PC-9 (cell line): ENCODE measurements at regions of chr19 and their contacts with region 1.

Region 1: DNA sequence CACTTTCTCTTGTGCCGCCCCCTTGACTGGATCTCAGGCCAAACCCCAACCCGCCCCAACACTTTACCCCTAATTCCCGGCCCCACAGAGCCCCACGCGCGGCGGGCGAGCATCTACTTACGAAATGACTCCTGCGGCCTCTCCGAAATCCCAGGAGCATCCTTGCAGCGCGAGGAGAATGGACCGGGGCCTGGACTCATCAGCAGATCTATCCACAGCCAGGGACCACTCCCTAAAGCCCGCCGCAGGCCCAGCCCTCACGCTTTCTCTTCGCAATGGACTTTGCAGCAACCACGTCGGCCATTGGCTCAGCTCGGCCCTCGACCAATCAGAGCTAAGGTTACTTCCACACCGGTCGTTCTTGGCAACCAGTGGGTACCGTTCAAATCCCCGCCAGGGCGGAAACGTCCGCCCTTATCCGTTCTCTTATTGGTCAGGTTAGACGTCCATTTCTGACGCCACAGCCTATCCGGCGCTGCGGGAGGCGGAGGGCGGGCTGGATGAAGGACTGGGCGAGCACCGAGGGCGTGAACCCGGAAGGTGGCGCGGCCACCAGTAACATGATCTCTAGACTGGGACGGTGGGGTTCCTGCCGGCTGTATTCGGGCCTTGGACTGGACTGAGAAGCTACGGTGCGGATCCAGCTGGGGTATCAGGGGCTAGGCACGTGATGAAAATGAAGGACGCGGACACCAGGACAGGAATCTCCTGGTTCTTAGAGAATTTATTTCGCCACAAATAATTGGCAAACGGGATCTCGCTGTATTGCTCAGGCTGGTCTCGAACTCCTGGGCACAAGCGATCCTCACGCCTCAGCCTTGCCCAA is at the starts of genes CEP89 and FAAP24:
- DNase-seq: peak; percentile 99
- H3K4me3 ChIP-seq: peak within 1 kb of the TSS; percentile 86
- H3K27ac ChIP-seq: peak within 1 kb of the TSS; percentile 46
- H3K4me1 ChIP-seq: no peaks in the 10 kb centered on the region; the same call in 1 of the 2 replicates
- H3K27me3 ChIP-seq: no peaks in the 10 kb centered on the region
- CTCF ChIP-seq: no peak
- total RNA-seq, gene CEP89: 29.3 and 33.6 TPM in 2 replicates
- total RNA-seq, gene FAAP24: 6.9 and 10.1 TPM in 2 replicates

Region 2: GRCh38 chr19:32691291-32691951 is 280.5 kb before region 1 on chr19 and contains the start of gene NUDT19:
- CTCF ChIA-PET with region 1: no interaction called
- POLR2A ChIA-PET with region 1: no interaction called
- intact Hi-C with region 1: loop called (anchors 5 kb)
- DNase-seq: peak; percentile 75 to 90
- H3K4me3 ChIP-seq: peak within 1 kb of the TSS; percentile 85
- H3K27ac ChIP-seq: peak within 1 kb of the TSS; percentile 68; the same call in 1 of the 2 replicates
- H3K4me1 ChIP-seq: peaks cover 35% of the 10 kb centered on the region
- H3K27me3 ChIP-seq: no peaks in the 10 kb centered on the region
- CTCF ChIP-seq: no peak
- total RNA-seq, gene NUDT19: 21.3 and 26.7 TPM in 2 replicates

Region 3: DNA sequence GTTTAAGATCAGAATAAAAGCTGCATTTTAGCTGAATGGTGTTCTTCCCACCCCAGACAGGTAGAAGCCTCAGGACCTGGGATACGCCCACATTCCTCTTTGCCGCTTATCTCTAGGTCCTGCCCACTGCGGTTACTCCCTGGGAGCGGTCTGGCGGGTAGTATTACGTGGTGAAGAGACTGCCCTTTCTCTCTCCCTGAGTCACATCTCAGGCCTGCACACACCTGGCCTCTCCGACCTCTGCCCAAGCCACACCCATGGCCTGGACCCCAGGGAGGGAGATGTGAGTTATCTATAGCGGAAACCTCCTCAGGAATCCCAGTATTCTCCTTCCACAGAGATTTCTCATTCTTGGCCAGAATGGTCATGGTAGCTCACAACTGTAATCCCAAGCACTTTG is 75.5 kb after region 1 on chr19:
- CTCF ChIA-PET with region 1: interaction called, 3 read pairs
- POLR2A ChIA-PET with region 1: interaction called, 16 read pairs
- intact Hi-C with region 1: no loop called
- DNase-seq: peak; percentile 96 to 99
- H3K4me3 ChIP-seq: peak overlapping the region; percentile 17; the same call in 1 of the 2 replicates
- H3K27ac ChIP-seq: peak overlapping the region; percentile 98
- H3K4me1 ChIP-seq: peaks cover 85% of the 10 kb centered on the region
- H3K27me3 ChIP-seq: no peaks in the 10 kb centered on the region
- CTCF ChIP-seq: no peak

Region 4: GRCh38 chr19:33071887-33072286 is 100.0 kb after region 1 on chr19:
- CTCF ChIA-PET with region 1: no interaction called
- POLR2A ChIA-PET with region 1: interaction called, 22 read pairs
- intact Hi-C with region 1: no loop called
- DNase-seq: peak in 1 of 2 experiments; percentile 52
- H3K4me3 ChIP-seq: no peak overlapping the region
- H3K27ac ChIP-seq: no peak overlapping the region
- H3K4me1 ChIP-seq: peaks cover 9% of the 10 kb centered on the region
- H3K27me3 ChIP-seq: no peaks in the 10 kb centered on the region
- CTCF ChIP-seq: no peak

Region 5: DNA sequence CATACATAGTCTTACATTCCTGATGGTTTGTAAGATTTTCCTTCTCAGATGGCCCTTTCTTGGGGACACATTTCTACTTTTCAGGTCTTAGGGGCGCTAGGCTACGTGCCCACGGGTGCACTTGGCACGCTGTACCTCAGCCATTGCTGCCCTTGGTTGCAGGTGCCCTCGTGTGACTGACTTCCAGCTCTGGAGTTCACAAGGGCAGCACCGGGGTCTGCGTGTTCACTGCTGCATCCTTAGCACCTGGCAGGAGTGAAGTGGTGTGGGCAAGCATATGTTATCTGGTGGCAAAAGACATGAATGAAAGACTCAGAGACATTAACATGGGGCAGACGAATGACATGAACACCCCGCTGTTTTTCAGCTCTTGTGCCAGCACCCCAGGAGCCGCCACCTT is 146.7 kb after region 1 on chr19:
- CTCF ChIA-PET with region 1: interaction called, 8 read pairs
- POLR2A ChIA-PET with region 1: no interaction called
- intact Hi-C with region 1: loop called (anchors 1 kb)
- DNase-seq: no peak
- H3K4me3 ChIP-seq: no peak overlapping the region
- H3K27ac ChIP-seq: no peak overlapping the region
- H3K4me1 ChIP-seq: no peaks in the 10 kb centered on the region
- H3K27me3 ChIP-seq: no peaks in the 10 kb centered on the region
- CTCF ChIP-seq: no peak

Region 6: GRCh38 chr19:33176670-33177416 is 204.9 kb after region 1 on chr19:
- CTCF ChIA-PET with region 1: no interaction called
- POLR2A ChIA-PET with region 1: interaction called, 10 read pairs
- intact Hi-C with region 1: loop called (anchors 2 kb)
- DNase-seq: peak; percentile 94 to 98
- H3K4me3 ChIP-seq: peak overlapping the region; percentile 86
- H3K27ac ChIP-seq: peak overlapping the region; percentile 60
- H3K4me1 ChIP-seq: peaks cover 32% of the 10 kb centered on the region
- H3K27me3 ChIP-seq: no peaks in the 10 kb centered on the region
- CTCF ChIP-seq: peak; percentile 3; the same call in 1 of the 2 replicates